Endothelial cell of umbilical vein (primary cell): ENCODE measurements at regions of chr18 and their contacts with region 1.

Region 1: DNA sequence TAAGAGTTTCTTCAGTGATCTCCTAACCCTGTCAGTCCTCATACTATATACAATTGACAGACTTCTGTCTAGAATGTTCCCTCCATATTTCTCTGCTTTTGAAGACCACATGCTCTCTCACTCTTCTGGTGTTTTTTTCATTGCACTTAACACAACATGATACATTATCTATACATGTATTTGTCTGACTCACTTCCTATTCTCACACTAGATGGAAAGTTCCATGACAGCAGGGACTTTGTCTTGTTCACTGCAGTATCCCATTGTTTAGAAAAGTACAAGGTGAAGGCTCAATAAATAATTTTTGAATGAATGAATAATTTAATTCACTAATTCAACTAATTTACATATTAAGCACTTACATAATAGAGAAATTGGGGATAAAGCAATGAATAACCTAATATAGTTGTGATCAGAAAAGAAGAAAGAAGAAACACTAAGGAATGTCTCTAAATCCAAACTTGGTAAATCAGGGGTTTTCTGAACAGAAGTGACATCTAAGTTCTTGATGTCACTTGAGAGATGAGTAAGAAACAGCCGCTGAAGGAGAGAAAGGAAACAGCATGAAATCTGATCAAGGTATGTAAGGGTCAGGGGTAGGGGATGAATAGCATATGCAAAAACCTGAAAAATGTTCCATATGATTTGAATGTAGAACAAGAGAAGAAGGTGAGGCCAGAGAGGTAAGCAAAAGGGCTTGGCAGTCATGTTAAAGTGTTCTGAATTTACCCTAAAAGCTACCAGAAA is 42.4 kb downstream of the MBD2 start:
- DNase-seq: peak; percentile 84
- H3K4me3 ChIP-seq: no peak overlapping the region
- H3K27ac ChIP-seq: peak overlapping the region; percentile 60
- H3K4me1 ChIP-seq: peaks cover 15% of the 10 kb centered on the region
- H3K27me3 ChIP-seq: no peaks in the 10 kb centered on the region
- CTCF ChIP-seq: no peak
- POLR2A ChIP-seq: no peak

Region 2: DNA sequence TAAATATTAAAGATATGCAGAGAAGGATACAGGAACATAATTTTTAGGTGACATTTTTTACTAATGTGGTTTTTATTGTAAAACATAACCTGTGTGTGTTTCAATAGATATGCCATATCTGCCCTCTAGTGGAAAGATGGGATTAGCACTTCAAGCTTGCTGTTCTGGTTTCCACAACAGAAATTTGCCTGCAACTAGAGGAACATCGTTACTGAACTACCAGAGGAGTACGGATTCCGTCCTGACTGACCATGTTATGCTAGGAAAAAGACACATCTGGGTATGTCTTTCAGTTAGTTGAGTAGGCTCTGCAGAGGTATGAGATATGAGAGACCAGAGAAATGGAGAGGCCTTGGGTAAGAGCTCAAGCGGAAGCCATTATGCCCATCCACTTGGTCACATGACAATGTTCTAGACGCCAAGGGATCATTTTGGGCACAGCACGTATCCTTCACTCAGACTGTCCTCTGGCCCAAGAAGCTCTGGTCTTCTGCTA is 62.5 kb before region 1 on chr18:
- CTCF ChIA-PET with region 1: no interaction called
- POLR2A ChIA-PET with region 1: no interaction called
- dilution Hi-C with region 1: no loop called
- intact Hi-C with region 1: no loop called
- DNase-seq: peak; percentile 69
- H3K4me3 ChIP-seq: no peak overlapping the region
- H3K27ac ChIP-seq: no peak overlapping the region
- H3K4me1 ChIP-seq: no peaks in the 10 kb centered on the region
- H3K27me3 ChIP-seq: no peaks in the 10 kb centered on the region
- CTCF ChIP-seq: peak; percentile 59 to 64
- POLR2A ChIP-seq: no peak

Region 3: DNA sequence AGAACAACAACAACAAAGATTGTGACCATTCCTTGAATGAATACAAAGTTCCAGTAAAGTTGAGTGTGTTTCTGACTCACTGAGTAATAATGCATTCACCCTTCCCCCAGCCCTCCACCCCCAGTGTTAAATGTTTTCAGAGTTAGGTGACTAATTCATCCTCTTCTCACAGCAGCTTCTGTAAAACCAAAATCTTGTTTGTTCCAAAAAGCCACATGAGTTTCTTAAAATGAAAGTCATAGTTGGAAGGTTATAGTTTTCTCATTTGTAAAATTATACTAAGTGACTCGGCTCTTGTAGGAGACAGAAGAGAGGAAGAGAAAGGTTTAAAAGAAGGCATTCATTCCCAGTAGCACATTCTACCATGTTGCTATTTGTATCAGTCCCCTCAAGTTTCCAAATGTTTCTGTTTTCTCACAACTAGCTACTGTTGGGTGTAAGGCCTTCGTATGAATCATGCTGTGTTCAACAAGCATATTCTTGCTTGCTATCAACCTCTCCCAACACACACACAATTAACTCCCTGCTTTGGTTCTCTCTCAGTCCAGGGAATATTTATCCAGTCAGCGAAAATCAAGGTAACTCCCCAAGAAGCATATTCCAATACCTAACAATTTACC is 32.8 kb before region 1 on chr18:
- CTCF ChIA-PET with region 1: no interaction called
- POLR2A ChIA-PET with region 1: no interaction called
- dilution Hi-C with region 1: no loop called
- intact Hi-C with region 1: loop called (anchors 1 kb)
- DNase-seq: peak; percentile 94
- H3K4me3 ChIP-seq: peak overlapping the region in 1 of 3 experiments; percentile 50
- H3K27ac ChIP-seq: peak overlapping the region; percentile 98
- H3K4me1 ChIP-seq: peaks cover 26% of the 10 kb centered on the region
- H3K27me3 ChIP-seq: no peaks in the 10 kb centered on the region
- CTCF ChIP-seq: no peak
- POLR2A ChIP-seq: no peak

Region 4: GRCh38 chr18:54193786-54194185 is 11.8 kb after region 1 on chr18:
- CTCF ChIA-PET with region 1: no interaction called
- POLR2A ChIA-PET with region 1: no interaction called
- dilution Hi-C with region 1: no loop called
- intact Hi-C with region 1: loop called (anchors 1 kb)
- DNase-seq: no peak
- H3K4me3 ChIP-seq: no peak overlapping the region
- H3K27ac ChIP-seq: no peak overlapping the region
- H3K4me1 ChIP-seq: no peaks in the 10 kb centered on the region
- H3K27me3 ChIP-seq: no peaks in the 10 kb centered on the region
- CTCF ChIP-seq: no peak
- POLR2A ChIP-seq: no peak

Region 5: DNA sequence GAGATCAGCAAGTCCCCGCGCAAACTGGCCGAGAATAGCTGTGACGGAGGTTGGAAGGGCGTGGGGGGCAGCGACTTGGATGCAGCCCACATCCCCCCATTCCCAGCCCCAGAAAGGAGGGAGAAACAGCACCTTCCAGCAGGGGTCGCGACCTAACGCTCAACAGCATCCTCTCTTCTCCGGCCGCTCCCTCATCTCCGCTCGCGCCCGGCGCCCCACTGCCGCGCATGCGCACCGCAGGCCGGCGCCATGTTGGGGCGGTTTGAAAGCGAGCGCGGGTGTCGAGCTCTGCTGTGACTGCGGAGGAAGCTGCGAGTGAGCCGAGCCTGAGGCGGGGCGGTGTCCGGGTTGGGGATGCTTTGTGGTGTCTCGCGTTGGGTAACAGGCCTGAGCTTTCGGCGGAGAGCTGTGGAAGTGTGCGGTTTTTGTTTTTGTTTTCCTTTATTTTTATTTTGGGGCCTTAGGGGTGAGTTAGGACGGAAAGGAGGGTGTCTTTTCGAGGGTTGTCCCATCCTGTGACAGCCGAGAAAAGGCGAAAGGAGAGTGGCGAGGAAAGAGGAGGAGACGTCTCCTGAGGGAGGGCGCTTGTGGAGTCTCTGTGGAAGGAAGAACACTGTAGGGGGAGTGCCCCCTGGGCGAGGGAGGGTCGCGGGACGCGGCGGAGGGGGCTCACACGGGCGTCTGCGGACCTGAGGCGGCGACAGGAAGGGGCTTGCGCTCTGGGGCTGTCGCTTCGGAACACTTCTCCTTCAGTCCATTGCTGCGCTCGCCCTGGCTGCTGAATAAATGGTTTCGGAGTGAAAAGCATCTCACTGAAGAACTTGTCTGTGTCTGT is 175.8 kb after region 1 on chr18 and contains the starts of genes C18orf54 and STARD6:
- CTCF ChIA-PET with region 1: no interaction called
- POLR2A ChIA-PET with region 1: no interaction called
- dilution Hi-C with region 1: no loop called
- intact Hi-C with region 1: no loop called
- DNase-seq: peak; percentile 92
- H3K4me3 ChIP-seq: peak within 1 kb of the TSS; percentile 64 to 98 (median 79)
- H3K27ac ChIP-seq: peak within 1 kb of the TSS; percentile 51
- H3K4me1 ChIP-seq: peaks cover 11% of the 10 kb centered on the region
- H3K27me3 ChIP-seq: no peaks in the 10 kb centered on the region
- CTCF ChIP-seq: peak; percentile 22 to 23
- POLR2A ChIP-seq: peak; percentile 86
- total RNA-seq, gene C18orf54: 20.8 and 21.4 TPM in 2 replicates
- total RNA-seq, gene STARD6: not detected in 2 replicates